CD4-positive, alpha-beta T cell (primary cell): ENCODE measurements at regions of chr19 and their contacts with region 1.

Region 1: DNA sequence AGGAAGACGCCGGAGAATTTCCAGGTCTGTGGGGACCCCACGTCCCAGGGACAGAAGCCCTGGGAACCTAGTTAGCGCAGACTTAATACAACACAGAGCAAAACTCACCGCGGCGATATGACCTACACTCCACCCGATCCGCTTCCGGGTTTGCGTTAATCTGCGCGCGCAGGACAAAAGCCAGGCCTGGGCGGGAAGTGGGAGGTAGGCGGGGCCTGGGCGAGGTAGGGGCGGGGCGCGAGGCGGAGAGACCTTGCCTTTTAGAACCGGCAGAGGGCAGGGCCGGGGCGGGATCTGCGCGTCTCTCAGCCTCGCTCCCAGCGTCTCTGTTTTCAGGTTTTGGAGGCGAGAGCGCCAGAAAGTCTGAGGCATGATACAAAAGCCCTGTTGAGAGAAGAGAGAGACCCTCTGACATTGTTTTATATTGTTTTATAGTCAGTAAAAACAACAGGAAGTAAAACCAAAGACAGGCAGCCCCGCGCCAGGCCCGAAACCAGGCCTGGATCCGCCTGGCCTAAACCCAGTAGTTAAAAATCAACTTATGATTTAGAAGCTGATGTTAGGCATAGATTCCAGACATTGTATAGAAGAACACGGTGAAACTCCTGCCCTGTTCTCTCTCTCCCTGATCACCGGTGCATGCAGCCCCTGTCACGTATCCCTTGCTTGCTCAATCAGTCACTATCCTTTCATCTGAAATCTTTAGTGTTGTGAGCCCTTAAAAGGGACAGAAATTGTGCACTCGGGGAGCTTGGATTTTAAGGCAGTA is at the start of gene ZNF611:
- DNase-seq: peak; percentile 98 to 100 (median 99)
- ATAC-seq: peak; percentile 97
- H3K4me3 ChIP-seq: peak within 1 kb of the TSS; percentile 98
- H3K4me3 Mint-ChIP-seq: peak within 1 kb of the TSS; percentile 95
- H3K27ac ChIP-seq: peak within 1 kb of the TSS; percentile 74 to 93
- H3K27ac Mint-ChIP-seq: peak within 1 kb of the TSS; percentile 96
- H3K4me1 ChIP-seq: peaks cover 23% of the 10 kb centered on the region
- H3K4me1 Mint-ChIP-seq: peaks cover 28% of the 10 kb centered on the region
- H3K27me3 ChIP-seq: no peaks in the 10 kb centered on the region
- H3K27me3 Mint-ChIP-seq: no peaks in the 10 kb centered on the region
- CTCF ChIP-seq: peak; percentile 70
- total RNA-seq, gene ZNF611: 14.6 to 15.5 TPM

Region 2: GRCh38 chr19:52139252-52140031 is 595.6 kb before region 1 on chr19 and contains the start of gene ZNF616:
- CTCF ChIA-PET with region 1: no interaction called
- POLR2A ChIA-PET with region 1: no interaction called
- intact Hi-C with region 1: loop called in 1 of 2 experiments (anchors 5 kb)
- DNase-seq: peak; percentile 50 to 99 (median 84)
- ATAC-seq: peak; percentile 43
- H3K4me3 ChIP-seq: peak within 1 kb of the TSS; percentile 100
- H3K4me3 Mint-ChIP-seq: peak within 1 kb of the TSS; percentile 97
- H3K27ac ChIP-seq: peak within 1 kb of the TSS; percentile 79 to 92
- H3K27ac Mint-ChIP-seq: peak within 1 kb of the TSS; percentile 93
- H3K4me1 ChIP-seq: peaks cover 23% of the 10 kb centered on the region
- H3K4me1 Mint-ChIP-seq: peaks cover 38% of the 10 kb centered on the region
- H3K27me3 ChIP-seq: no peaks in the 10 kb centered on the region
- H3K27me3 Mint-ChIP-seq: no peaks in the 10 kb centered on the region
- CTCF ChIP-seq: peak; percentile 90
- total RNA-seq, gene ZNF616: 0.99 to 1.5 TPM

Region 3: DNA sequence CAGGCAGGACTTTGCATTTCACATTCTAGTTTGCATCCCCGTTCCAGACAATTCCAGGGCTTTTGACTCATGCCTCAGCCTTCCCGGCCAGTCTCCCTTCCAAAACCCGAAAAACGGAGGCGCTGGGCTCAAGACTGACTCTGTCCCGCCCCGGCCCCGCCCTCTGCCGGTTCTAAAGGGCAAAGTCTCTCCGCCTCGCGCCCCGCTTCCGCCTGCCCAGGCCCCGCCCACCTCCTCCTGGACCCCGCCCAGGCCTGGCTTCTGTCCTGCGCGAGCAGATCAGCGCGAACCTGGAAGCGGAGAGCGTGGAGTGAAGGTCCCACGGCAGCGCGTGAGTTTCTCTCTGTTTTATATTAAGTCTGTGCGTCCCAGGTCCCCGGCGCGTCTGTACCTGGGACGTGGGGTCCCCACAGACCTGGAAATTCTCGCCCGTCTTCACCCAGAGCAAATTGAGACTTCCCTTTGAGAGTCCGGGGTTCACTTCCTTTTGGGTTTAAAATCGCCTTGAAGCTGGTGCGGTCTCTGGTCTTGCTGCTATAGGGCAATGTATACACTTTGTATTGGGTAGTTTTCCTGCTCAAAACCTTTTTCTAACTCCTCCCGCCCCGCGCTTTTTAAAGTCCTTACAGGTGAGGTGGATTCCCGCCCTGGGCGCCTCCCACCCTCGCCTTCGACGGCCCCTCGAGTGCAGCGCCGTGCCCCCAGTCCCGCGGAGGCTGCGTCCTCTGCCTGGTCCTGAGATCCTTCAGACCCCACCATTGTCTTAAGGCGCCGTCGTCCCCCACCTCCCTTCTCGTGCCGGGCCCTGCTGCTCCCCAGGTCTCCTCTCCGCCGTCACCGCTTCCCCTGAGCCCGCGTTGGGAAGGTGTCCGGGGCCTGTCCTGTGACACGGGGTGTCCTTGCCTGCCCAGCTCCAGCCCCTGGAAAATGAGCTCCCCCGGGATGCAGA is 133.8 kb before region 1 on chr19:
- CTCF ChIA-PET with region 1: no interaction called
- POLR2A ChIA-PET with region 1: interaction called, 3 read pairs
- intact Hi-C with region 1: loop called in 1 of 2 experiments (anchors 1 kb)
- DNase-seq: peak; percentile 87 to 97 (median 93)
- ATAC-seq: peak; percentile 99
- H3K4me3 ChIP-seq: peak overlapping the region; percentile 94
- H3K4me3 Mint-ChIP-seq: peak overlapping the region; percentile 89
- H3K27ac ChIP-seq: peak overlapping the region; percentile 35 to 68
- H3K27ac Mint-ChIP-seq: peak overlapping the region; percentile 86
- H3K4me1 ChIP-seq: peaks cover 26% of the 10 kb centered on the region
- H3K4me1 Mint-ChIP-seq: peaks cover 45% of the 10 kb centered on the region
- H3K27me3 ChIP-seq: no peaks in the 10 kb centered on the region
- H3K27me3 Mint-ChIP-seq: no peaks in the 10 kb centered on the region
- CTCF ChIP-seq: peak; percentile 66

Region 4: DNA sequence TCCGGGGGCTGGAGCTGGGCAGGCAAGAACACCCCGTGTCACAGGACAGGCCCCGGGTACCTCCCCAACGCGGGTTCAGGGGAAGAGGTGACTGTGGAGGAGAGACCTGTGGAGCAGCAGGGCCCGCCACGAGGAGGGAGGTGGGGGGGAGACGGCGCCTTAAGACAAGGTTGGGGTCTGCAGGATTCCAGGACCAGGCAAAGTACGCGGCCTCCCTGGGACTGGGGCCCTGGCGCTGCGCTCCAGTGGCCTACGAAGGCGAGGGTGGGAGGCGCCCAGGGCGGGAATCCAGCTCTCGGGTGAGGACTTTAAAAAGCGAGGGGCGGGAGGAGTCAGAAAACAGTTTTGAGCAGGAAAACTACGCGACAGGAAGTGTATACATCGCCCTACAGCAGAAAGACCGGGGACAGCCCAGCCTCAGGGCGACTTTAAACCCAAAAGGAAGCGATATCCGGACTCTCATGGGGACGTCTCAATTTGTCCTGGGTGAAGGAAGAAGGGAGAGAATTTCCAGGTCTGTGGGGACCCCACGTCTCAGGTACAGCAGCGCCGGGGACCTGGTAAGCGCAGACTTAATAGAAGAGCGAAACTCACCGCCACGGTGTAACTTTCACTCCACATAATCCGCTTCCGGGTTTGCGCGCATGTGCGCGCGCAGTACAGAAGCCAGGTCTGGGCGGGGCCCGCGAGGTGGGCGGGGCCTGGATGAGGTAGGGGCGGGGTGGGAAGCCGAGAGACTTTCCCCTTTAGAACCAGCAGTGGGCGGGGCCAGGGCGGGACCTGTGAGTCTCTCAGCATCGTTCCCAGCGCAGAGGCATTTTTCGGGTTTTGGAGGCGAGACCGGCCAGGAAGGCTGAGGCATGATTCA is 97.1 kb before region 1 on chr19 and contains the start of gene ZNF83:
- CTCF ChIA-PET with region 1: no interaction called
- POLR2A ChIA-PET with region 1: no interaction called
- intact Hi-C with region 1: loop called in 1 of 2 experiments (anchors 5 kb)
- DNase-seq: peak; percentile 85 to 99 (median 94)
- ATAC-seq: peak; percentile 95
- H3K4me3 ChIP-seq: peak within 1 kb of the TSS; percentile 75
- H3K4me3 Mint-ChIP-seq: peak within 1 kb of the TSS; percentile 92
- H3K27ac ChIP-seq: peak within 1 kb of the TSS; percentile 77 to 82
- H3K27ac Mint-ChIP-seq: peak within 1 kb of the TSS; percentile 93
- H3K4me1 ChIP-seq: peaks cover 21% of the 10 kb centered on the region
- H3K4me1 Mint-ChIP-seq: peaks cover 40% of the 10 kb centered on the region
- H3K27me3 ChIP-seq: no peaks in the 10 kb centered on the region
- H3K27me3 Mint-ChIP-seq: no peaks in the 10 kb centered on the region
- CTCF ChIP-seq: no peak
- total RNA-seq, gene ZNF83: 58.7 to 60.2 TPM

Region 5: DNA sequence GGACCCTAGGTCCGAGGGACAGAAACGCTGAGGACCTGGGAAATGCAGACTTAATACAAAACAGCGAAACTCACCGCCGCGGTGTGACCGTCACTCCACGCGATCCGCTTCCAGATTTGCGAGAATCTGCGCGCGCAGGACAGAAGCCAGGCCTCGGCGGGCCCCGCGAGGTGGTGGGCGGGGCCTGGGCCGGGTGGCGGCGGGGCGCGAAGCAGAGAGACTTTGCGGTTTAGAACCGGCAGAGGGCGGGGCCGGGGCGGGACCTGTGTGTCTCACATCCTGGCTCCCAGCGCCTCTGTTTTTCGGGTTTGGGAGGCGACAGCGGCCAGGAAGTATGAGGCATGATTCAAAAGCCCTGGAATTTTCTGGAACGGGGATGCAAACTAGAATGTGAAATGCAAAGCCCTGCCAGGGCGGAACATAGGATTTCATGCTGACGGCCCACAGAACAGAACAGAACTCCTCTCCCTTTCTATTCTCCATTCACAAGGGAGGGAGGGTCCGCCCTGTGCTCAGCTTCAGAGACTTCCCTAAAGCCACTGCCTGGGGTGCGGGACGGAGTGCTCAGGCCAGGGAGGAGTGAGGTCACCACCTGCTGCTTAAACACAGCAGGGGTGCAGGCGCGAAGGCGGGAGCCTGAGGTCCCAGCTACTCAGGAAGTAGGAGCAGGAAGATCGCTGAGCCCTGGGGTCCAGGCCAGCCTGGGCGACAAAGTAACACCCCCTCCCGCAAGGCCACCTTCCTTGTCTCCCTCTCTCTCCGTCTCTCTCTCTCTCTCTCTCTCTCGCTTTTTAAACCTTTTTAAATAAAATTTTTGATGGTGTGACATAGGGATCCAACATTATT is 44.5 kb before region 1 on chr19:
- CTCF ChIA-PET with region 1: no interaction called
- POLR2A ChIA-PET with region 1: no interaction called
- intact Hi-C with region 1: loop called in 1 of 2 experiments (anchors 2 kb)
- DNase-seq: peak; percentile 82 to 97 (median 90)
- ATAC-seq: peak; percentile 95
- H3K4me3 ChIP-seq: peak overlapping the region; percentile 82
- H3K4me3 Mint-ChIP-seq: peak overlapping the region; percentile 90
- H3K27ac ChIP-seq: peak overlapping the region; percentile 58 to 71
- H3K27ac Mint-ChIP-seq: peak overlapping the region; percentile 89
- H3K4me1 ChIP-seq: peaks cover 21% of the 10 kb centered on the region
- H3K4me1 Mint-ChIP-seq: peaks cover 34% of the 10 kb centered on the region
- H3K27me3 ChIP-seq: no peaks in the 10 kb centered on the region
- H3K27me3 Mint-ChIP-seq: no peaks in the 10 kb centered on the region
- CTCF ChIP-seq: no peak

Region 6: GRCh38 chr19:52700673-52701072 is 34.4 kb before region 1 on chr19:
- CTCF ChIA-PET with region 1: no interaction called
- POLR2A ChIA-PET with region 1: no interaction called
- intact Hi-C with region 1: no loop called
- DNase-seq: no peak
- ATAC-seq: no peak
- H3K4me3 ChIP-seq: no peak overlapping the region
- H3K4me3 Mint-ChIP-seq: no peak overlapping the region
- H3K27ac ChIP-seq: no peak overlapping the region
- H3K27ac Mint-ChIP-seq: no peak overlapping the region
- H3K4me1 ChIP-seq: no peaks in the 10 kb centered on the region
- H3K4me1 Mint-ChIP-seq: no peaks in the 10 kb centered on the region
- H3K27me3 ChIP-seq: no peaks in the 10 kb centered on the region
- H3K27me3 Mint-ChIP-seq: no peaks in the 10 kb centered on the region
- CTCF ChIP-seq: no peak

Region 7: DNA sequence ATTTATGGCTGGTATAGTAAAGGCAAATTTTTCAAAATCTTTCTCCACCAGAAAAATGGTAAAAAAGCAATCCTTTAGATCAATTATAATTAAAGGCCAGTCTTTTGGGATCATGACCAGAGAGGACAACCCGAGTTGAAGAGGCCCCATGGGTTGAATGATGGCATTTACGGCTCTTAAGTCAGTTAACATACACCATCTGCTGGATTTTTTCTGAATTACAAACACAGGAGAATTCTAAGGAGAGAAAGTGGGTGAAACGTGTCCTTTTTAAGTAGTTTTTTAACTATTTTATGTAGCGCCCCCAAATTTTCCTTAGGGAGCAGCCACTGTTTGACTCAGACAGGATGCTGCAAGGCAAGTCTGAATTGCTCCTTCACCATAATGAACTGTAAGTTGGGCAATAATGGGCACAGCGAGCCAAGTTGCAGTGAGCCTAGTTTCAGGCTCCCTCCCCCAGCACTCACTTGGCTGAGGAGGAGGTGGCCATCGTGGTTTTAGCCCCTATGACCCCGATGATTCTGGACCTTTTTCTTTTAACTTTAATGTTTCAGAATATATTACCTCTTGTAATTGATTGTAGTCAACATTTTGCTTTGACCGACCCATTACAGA is 13.4 kb after region 1 on chr19:
- CTCF ChIA-PET with region 1: no interaction called
- POLR2A ChIA-PET with region 1: no interaction called
- intact Hi-C with region 1: no loop called
- DNase-seq: peak in 4 of 14 experiments; percentile 26 to 74 (median 66)
- ATAC-seq: no peak
- H3K4me3 ChIP-seq: no peak overlapping the region
- H3K4me3 Mint-ChIP-seq: no peak overlapping the region
- H3K27ac ChIP-seq: no peak overlapping the region
- H3K27ac Mint-ChIP-seq: no peak overlapping the region
- H3K4me1 ChIP-seq: no peaks in the 10 kb centered on the region
- H3K4me1 Mint-ChIP-seq: peaks cover 8% of the 10 kb centered on the region
- H3K27me3 ChIP-seq: no peaks in the 10 kb centered on the region
- H3K27me3 Mint-ChIP-seq: no peaks in the 10 kb centered on the region
- CTCF ChIP-seq: peak; percentile 24

Region 8: DNA sequence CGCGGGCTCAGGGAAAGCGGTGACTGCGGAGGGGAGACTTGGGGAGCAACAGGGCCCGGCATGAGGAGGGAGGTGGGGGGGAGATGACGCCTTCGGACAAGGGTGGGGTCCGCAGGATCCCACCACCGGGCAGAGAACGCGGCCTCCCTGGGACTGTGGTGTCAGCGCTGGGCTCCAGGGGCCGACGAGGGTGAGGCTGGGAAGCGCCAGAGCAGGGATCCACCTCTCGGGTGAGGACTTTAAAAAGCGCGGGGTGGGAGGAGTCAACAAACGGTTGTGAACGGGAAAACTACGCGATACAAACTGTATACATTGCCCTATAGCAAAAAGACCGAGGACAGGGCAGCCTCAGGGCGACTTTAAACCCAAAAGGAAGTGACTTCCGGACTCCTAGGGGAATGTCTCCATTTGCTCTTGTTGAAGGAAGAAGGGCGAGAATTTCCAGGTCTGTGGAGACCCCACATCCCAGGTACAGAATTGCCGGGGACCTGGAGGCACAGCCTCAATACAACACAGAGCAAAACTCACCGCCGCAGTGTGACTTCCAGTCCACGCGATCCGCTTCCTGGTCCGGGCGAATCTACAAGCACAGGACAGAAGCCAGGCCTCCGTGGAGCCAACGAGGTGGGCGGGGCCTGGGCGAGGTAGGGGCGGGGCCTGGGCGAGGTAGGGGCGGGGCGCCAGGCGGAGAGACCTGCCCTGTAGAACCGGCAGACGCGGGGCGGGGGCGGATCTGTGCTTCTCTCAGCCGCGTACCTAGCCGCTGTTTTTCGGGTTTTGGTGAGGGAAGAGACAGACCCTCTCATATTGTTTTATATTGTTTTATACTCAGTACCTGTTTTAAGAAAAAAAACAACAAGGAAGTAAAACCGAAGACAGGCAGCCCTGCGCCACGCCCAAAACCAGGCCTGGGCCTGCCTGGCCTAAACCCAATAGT is 188.0 kb after region 1 on chr19 and contains the start of gene ZNF888:
- CTCF ChIA-PET with region 1: no interaction called
- POLR2A ChIA-PET with region 1: no interaction called
- intact Hi-C with region 1: loop called in 1 of 2 experiments (anchors 10 kb)
- DNase-seq: peak; percentile 71 to 92 (median 78)
- ATAC-seq: peak; percentile 99
- H3K4me3 ChIP-seq: peak within 1 kb of the TSS; percentile 68
- H3K4me3 Mint-ChIP-seq: peak within 1 kb of the TSS; percentile 96
- H3K27ac ChIP-seq: peak within 1 kb of the TSS in 1 of 2 donors; percentile 38
- H3K27ac Mint-ChIP-seq: peak within 1 kb of the TSS; percentile 89
- H3K4me1 ChIP-seq: peaks cover 22% of the 10 kb centered on the region
- H3K4me1 Mint-ChIP-seq: peaks cover 34% of the 10 kb centered on the region
- H3K27me3 ChIP-seq: peaks cover 0 to 2% of the 10 kb centered on the region in 2 experiments
- H3K27me3 Mint-ChIP-seq: no peaks in the 10 kb centered on the region
- CTCF ChIP-seq: no peak
- total RNA-seq, gene ZNF888: 2.5 to 3.0 TPM

Region 9: DNA sequence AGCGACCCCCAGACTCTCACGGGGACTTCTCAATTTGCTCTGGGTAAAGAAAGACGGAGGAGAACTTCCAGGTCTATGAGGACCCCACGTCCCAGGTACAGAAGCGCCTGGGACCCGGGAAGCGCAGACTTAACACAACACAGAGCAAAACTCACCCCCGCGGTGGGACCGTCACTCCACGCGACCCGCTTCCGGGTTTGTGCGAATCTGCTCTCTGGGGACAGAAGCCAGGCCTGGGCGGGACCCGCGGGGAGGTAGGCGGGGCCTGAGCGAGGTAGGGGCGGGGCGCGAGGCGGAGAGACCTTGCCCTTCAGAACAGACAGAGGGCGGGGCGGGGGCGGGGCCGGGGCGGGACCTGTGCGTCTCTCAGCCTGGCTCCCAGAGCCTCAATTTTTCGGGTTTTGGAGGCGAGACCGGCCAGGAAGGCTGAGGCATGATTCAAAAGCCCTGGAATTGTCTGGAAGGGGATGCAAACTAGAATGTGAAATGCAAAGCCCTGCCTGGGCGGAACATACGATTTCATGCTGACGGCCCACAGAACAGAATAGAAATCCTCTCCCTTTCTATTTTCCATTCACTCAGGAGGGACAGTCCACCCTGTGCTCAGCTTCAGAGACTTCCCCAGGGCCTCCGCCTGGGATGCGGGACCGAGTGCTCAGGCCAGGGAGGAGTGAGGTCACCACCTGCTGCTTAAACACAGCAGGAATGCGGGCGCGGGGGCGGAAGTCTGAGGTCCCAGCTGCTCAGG is 207.5 kb after region 1 on chr19:
- CTCF ChIA-PET with region 1: no interaction called
- POLR2A ChIA-PET with region 1: no interaction called
- intact Hi-C with region 1: loop called in 1 of 2 experiments (anchors 1 kb)
- DNase-seq: peak; percentile 89 to 97 (median 94)
- ATAC-seq: peak; percentile 99
- H3K4me3 ChIP-seq: peak overlapping the region; percentile 92
- H3K4me3 Mint-ChIP-seq: peak overlapping the region; percentile 97
- H3K27ac ChIP-seq: peak overlapping the region; percentile 35 to 78
- H3K27ac Mint-ChIP-seq: peak overlapping the region; percentile 91
- H3K4me1 ChIP-seq: peaks cover 24% of the 10 kb centered on the region
- H3K4me1 Mint-ChIP-seq: peaks cover 29% of the 10 kb centered on the region
- H3K27me3 ChIP-seq: no peaks in the 10 kb centered on the region
- H3K27me3 Mint-ChIP-seq: no peaks in the 10 kb centered on the region
- CTCF ChIP-seq: no peak